ENCODE measurements at regions of chr18 and their contacts with region 1.

Region 1: DNA sequence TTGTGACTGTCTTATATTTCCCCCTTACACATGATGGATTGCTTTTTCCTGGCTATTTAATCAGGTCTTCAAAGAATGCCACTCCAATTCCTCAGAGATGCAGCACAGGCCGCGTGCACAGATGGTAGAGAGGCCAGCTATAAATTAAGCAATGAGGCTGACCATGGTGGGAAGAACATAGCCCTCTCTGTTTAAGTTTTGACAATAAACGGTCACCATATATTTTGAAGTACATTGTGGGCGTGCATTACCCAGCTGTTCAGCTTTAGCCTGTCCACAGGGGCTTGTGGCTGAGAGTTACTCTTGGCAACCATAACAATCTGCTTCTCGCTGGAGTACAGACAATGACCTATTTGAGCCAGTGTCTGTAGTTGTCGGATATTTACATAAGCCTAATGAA is 730.8 kb downstream of the DCC start:
- DNase-seq: no peak
- ATAC-seq: no peak
- H3K4me3 ChIP-seq: no peak overlapping the region
- H3K27ac ChIP-seq: no peak overlapping the region
- H3K4me1 ChIP-seq: no peaks in the 10 kb centered on the region
- H3K27me3 ChIP-seq: no peaks in the 10 kb centered on the region
- CTCF ChIP-seq: no peak

Region 2: GRCh38 chr18:53018791-53019190 is 52.0 kb before region 1 on chr18:
- intact Hi-C with region 1: loop called in 1 of 10 experiments (anchors 10 kb)
- DNase-seq: no peak
- ATAC-seq: no peak
- H3K4me3 ChIP-seq: no peak overlapping the region
- H3K27ac ChIP-seq: no peak overlapping the region
- H3K4me1 ChIP-seq: no peaks in the 10 kb centered on the region
- H3K27me3 ChIP-seq: no peaks in the 10 kb centered on the region
- CTCF ChIP-seq: no peak

Measured in heart right ventricle (tissue), 16 donors.